ENCODE measurements at regions of chr12 and their contacts with region 1.

Region 1: GRCh38 chr12:21697904-21698630 is 40.4 kb upstream of the LDHB start:
- DNase-seq: peak; percentile 31
- ATAC-seq: 0 out of 2 replicates have a peak, but pooled peaks have one; percentile 49
- H3K4me3 ChIP-seq: no peak overlapping the region
- H3K27ac ChIP-seq: no peak overlapping the region
- H3K4me1 ChIP-seq: no peaks in the 10 kb centered on the region; a peak in 1 of 4 replicates
- H3K27me3 ChIP-seq: no peaks in the 10 kb centered on the region
- CTCF ChIP-seq: peak; percentile 37 to 80 (median 59); a peak in 5 of 6 replicates
- POLR2A ChIP-seq: no peak
- RAD21 ChIP-seq: peak; percentile 69

Region 2: GRCh38 chr12:21989819-21990412 is 291.8 kb after region 1 on chr12:
- CTCF ChIA-PET with region 1: interaction called, 142 read pairs
- POLR2A ChIA-PET with region 1: interaction called, 5 read pairs
- RAD21 ChIA-PET with region 1: interaction called, 16 to 20 read pairs
- intact Hi-C with region 1: loop called (anchors 1 kb)
- DNase-seq: peak; percentile 13
- ATAC-seq: peak; percentile 70
- H3K4me3 ChIP-seq: no peak overlapping the region
- H3K27ac ChIP-seq: no peak overlapping the region
- H3K4me1 ChIP-seq: no peaks in the 10 kb centered on the region
- H3K27me3 ChIP-seq: no peaks in the 10 kb centered on the region; the same call in 1 of the 2 replicates
- CTCF ChIP-seq: peak; percentile 41 to 64 (median 53); a peak in 5 of 6 replicates
- POLR2A ChIP-seq: no peak
- RAD21 ChIP-seq: peak; percentile 64

Region 3: GRCh38 chr12:22018860-22019259 is 320.8 kb after region 1 on chr12:
- CTCF ChIA-PET with region 1: interaction called, 54 read pairs
- POLR2A ChIA-PET with region 1: interaction called, 3 read pairs
- RAD21 ChIA-PET with region 1: interaction called, 3 to 6 read pairs
- intact Hi-C with region 1: loop called (anchors 1 kb)
- DNase-seq: no peak
- ATAC-seq: no peak; the same call in 1 of the 2 replicates
- H3K4me3 ChIP-seq: no peak overlapping the region
- H3K27ac ChIP-seq: no peak overlapping the region
- H3K4me1 ChIP-seq: 0 out of 4 replicates have a peak, but pooled peaks cover 0 to 2% of the 10 kb centered on the region in 2 experiments
- H3K27me3 ChIP-seq: no peaks in the 10 kb centered on the region
- CTCF ChIP-seq: peak; percentile 27 to 59 (median 43); a peak in 4 of 6 replicates
- POLR2A ChIP-seq: no peak
- RAD21 ChIP-seq: peak; percentile 57

Region 4: DNA sequence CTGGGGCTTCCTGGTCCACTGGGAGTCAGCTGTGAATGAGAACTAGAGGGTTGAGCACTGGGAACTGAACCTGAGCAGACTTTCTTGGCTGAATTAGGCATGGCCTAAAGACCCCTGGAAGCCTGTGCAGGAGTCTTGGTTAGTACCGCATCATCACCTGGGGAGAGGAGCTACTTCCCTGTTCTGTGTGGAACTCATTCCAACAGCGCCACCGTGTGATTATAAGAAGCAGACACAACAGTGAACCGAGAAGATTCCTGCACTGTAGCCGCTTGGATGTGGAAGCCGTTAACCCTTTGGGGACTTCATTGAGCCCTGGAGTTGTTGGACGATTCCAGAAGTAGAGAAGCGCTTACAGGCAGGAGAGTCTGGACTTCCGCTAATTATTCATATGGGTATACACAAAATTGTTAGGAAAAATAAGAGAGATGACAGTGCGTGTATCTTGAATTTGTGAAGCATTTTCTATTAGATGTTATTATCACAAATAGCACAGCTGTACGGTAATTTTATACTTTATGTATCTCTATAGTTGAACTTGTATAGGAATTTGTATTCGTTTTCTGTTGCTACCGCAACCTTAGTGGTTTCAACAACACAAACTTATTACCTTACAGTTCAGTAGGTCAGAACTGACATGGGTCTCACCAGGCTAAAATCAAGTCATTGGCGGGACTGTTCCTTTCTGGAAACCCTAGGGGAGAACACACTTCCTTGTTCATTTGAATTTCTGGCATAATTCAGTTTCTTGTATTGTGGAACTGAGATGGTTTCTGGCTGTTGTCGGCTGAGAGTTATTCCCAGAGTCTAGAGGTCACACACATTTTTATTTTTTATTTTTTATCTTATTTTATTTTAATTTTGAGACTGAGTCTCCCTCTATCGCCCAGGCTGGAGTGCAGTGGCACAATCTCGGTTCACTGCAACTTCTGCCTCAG is 745.6 kb after region 1 on chr12:
- CTCF ChIA-PET with region 1: interaction called, 7 read pairs
- POLR2A ChIA-PET with region 1: no interaction called
- RAD21 ChIA-PET with region 1: interaction called in 1 of 2 experiments, 6 read pairs
- intact Hi-C with region 1: loop called (anchors 10 kb)
- DNase-seq: peak; percentile 75
- ATAC-seq: peak; percentile 100
- H3K4me3 ChIP-seq: no peak overlapping the region
- H3K27ac ChIP-seq: no peak overlapping the region
- H3K4me1 ChIP-seq: no peaks in the 10 kb centered on the region
- H3K27me3 ChIP-seq: no peaks in the 10 kb centered on the region
- CTCF ChIP-seq: peak; percentile 77 to 85 (median 82)
- POLR2A ChIP-seq: no peak
- RAD21 ChIP-seq: peak; percentile 90

Measured in HCT116 (cell line).